ENCODE measurements at regions of chr1 and their contacts with region 1.

Region 1: DNA sequence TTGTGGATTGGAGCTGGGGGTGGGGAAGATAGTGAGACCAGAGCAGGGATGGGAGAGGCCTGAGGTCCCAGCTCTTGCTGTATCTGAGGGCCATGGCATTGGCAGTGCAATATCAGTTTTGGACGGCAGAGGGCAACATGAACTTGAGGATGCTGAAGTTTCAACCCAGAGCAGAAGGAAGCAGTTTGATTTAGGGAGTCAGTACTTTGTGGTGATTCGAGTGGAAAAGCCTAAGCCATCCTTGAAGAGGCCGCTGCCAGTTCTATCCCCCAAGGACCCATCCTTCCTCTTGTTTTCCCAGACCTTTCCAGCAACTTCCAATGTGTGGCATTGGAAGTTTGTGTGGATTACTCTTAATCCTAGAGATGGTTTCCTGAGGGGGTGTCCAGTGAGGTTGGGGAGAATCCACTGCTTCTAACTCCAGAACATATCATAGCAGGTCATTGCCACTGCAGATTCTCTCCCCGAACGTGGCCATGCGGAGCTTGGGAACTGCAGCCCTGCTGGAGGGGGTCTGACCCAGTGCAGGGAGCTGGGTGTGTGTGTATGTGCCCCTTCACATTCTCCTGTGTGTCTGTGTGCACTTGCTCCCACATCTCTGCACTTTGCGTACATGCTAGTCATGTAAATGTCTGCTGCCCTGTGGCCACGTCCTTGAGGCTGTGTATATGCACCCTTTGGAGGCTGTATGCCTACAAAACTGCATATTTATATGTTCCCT is 24.1 kb downstream of the SLC26A9 start:
- DNase-seq: peak; percentile 88
- ATAC-seq: peak; percentile 84

Region 2: GRCh38 chr1:205977402-205978014 is 58.3 kb after region 1 on chr1:
- intact Hi-C with region 1: loop called (anchors 5 kb)
- DNase-seq: peak; percentile 88
- ATAC-seq: peak; percentile 79

Region 3: GRCh38 chr1:206012086-206012859 is 93.1 kb after region 1 on chr1:
- intact Hi-C with region 1: no loop called
- DNase-seq: peak; percentile 81
- ATAC-seq: peak; percentile 93

Region 4: DNA sequence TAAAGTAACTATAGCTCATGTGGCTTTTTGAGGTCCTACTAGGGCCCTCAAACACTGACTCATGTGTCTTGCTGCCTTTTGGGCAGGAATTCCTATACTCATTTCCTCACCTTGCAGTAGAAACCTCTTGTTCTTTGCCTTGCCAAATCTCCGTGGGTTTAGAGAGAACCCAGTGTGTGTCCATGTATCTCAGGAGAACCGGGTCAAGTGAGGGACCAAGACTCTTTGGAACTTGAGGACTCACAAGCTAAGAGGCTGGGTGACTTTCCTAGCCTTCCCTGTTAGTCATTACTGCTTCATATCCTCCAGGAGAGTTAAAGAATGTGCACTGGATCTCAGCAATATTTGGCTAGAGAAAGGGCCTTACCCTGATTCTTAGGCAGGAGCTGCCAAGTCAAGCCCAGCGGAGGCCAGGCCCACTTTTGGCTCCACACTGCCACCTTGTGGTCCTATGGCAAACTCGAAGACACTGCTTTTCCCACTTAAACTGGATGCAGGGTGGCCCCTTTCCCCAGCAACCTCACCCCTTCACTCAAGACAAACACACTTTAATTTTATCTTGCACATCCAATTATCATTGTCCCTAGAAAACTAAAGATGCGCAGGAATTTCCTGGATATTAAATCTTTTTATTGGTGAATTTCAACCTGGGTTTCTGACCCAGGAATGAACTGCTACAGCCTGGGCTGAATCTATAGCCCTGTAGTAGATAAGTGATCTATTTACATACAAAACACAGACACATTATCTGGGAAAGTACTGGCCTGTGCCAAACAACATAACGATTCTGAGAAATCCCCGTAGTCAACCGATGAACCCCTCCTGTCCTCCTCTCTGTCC is 187.4 kb after region 1 on chr1:
- intact Hi-C with region 1: loop called (anchors 5 kb)
- DNase-seq: peak; percentile 90
- ATAC-seq: peak; percentile 91